Activated B cell treated with CpG ODN at 0.5 μM for 24 hours (primary cell): ENCODE measurements at regions of chr6 and their contacts with region 1.

Region 1: DNA sequence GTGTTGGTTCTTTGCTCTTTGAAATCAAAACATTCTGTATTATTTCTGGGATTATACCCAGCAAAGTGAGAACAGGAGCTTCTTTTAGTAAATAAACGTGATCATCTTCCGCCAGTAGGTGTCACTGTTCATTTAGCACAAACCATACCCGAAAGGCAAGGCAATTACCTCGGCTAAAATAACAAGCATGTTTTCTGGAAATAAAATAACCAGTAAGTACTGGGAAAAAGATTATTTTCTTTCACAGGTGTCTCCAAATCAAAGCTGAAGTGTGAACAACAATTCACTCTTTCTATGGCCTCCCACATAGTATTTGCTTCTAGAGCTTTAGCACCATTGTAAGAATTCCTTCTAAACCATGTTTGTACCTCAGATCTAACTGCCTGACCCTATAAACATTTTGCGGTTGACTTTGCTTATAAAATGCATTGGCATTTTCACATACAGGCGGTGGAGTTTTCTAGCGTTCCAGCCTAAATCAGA is 144.6 kb upstream of the AGPAT4 start:
- DNase-seq: no peak
- ATAC-seq: no peak
- H3K4me3 Mint-ChIP-seq: no peak overlapping the region
- H3K27ac Mint-ChIP-seq: no peak overlapping the region
- H3K4me1 Mint-ChIP-seq: no peaks in the 10 kb centered on the region
- H3K27me3 Mint-ChIP-seq: peaks cover 9% of the 10 kb centered on the region
- CTCF ChIP-seq: peak; percentile 48

Region 2: GRCh38 chr6:161308075-161308655 is 110.3 kb before region 1 on chr6:
- CTCF ChIA-PET with region 1: no interaction called
- POLR2A ChIA-PET with region 1: no interaction called
- intact Hi-C with region 1: no loop called
- DNase-seq: no peak
- ATAC-seq: no peak
- H3K4me3 Mint-ChIP-seq: no peak overlapping the region
- H3K27ac Mint-ChIP-seq: no peak overlapping the region
- H3K4me1 Mint-ChIP-seq: no peaks in the 10 kb centered on the region
- H3K27me3 Mint-ChIP-seq: peaks cover 6% of the 10 kb centered on the region
- CTCF ChIP-seq: no peak

Region 3: DNA sequence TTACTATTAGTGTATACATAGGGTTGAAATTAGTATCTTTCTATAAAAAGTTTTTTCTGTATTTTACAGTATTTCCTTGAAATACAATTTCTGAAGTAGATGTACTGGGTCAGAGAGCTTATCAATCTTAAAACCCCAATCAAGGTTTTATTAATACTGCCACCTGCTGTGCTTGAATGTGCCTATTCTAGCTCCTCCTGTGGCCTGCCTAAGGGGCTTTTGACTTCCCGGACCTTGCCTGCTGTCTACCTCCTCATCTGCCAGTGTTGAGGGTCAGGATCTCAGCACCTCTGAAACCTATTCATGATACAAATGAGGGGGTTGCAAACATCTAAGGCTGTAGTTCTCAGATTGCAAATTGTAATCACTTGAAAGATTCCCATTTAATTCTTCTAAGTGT is 1318.5 kb after region 1 on chr6:
- CTCF ChIA-PET with region 1: interaction called, 9 read pairs
- POLR2A ChIA-PET with region 1: no interaction called
- intact Hi-C with region 1: loop called (anchors 2 kb)
- DNase-seq: no peak
- ATAC-seq: no peak
- H3K4me3 Mint-ChIP-seq: no peak overlapping the region
- H3K27ac Mint-ChIP-seq: no peak overlapping the region
- H3K4me1 Mint-ChIP-seq: no peaks in the 10 kb centered on the region
- H3K27me3 Mint-ChIP-seq: peaks cover 2% of the 10 kb centered on the region
- CTCF ChIP-seq: no peak